GM12878 (cell line): ENCODE measurements at regions of chr3 and their contacts with region 1.

Region 1: GRCh38 chr3:58532794-58533220 is 4.2 kb downstream of the ACOX2 start:
- DNase-seq: peak; percentile 11
- ATAC-seq: peak; percentile 99
- H3K4me3 ChIP-seq: no peak overlapping the region
- H3K27ac ChIP-seq: no peak overlapping the region
- H3K4me1 ChIP-seq: no peaks in the 10 kb centered on the region
- H3K27me3 ChIP-seq: no peaks in the 10 kb centered on the region; a peak in 1 of 4 replicates
- CTCF ChIP-seq: peak; percentile 94 to 96 (median 94)
- EP300 ChIP-seq: no peak
- POLR2A ChIP-seq: no peak
- RAD21 ChIP-seq: peak; percentile 96

Region 2: DNA sequence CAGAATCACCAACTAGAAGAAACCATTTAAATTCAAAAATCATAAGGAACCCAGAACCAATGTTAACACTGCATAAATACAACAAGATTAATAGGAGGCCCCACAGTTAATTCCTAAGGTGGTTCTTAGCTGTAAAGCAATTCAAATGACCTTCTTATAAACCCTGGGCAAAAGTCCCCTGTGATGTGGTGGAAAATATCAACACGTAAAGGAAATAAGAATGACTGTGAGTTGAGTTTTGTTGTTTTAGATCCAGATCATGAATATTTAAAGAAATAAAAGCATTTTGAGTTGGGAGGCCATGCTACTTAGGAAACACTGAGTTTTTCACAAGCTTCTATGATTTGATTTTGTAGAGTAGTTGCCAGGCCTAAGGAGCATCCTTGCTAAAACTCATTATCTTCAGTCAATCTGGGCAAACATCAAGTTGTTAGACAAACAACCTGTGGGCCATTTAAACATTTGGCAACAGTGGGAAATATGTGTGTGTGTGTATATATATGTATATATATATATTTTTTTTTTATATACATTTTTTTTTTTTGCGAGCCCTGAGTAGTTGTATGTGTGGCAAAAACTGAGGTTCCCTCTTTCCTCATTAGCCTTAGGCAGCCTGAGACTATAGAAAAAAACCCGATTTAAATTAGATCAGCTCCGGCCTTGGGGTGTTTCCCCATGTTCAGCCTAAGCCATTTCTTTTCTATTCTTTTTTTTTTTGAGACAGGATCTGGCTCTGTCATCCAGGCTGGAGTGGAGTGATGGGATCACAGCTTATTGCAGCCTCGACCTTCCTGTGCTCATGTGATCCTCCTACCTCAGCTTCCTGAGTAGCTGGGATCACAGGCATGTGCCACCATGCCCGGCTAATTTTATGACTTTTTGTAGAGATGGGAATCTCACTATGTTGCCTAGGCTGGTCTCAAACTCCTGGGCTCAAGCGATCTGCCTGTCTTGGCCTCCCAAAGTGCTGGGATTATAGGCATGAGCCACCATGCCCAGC is 208.1 kb before region 1 on chr3:
- CTCF ChIA-PET with region 1: interaction called, 8 read pairs
- POLR2A ChIA-PET with region 1: no interaction called
- RAD21 ChIA-PET with region 1: interaction called, 3 read pairs
- SMC1A ChIA-PET with region 1: interaction called, 3 read pairs
- in situ Hi-C with region 1: loop called (anchors 10 kb)
- intact Hi-C with region 1: loop called (anchors 2 kb)
- DNase-seq: no peak
- ATAC-seq: peak; percentile 59
- H3K4me3 ChIP-seq: no peak overlapping the region
- H3K27ac ChIP-seq: no peak overlapping the region; the same call in 1 of the 2 replicates
- H3K4me1 ChIP-seq: peaks cover 17% of the 10 kb centered on the region
- H3K27me3 ChIP-seq: no peaks in the 10 kb centered on the region
- CTCF ChIP-seq: no peak
- EP300 ChIP-seq: no peak
- POLR2A ChIP-seq: no peak
- RAD21 ChIP-seq: no peak

Region 3: GRCh38 chr3:58349792-58350626 is 182.8 kb before region 1 on chr3:
- CTCF ChIA-PET with region 1: interaction called, 10 read pairs
- POLR2A ChIA-PET with region 1: no interaction called
- RAD21 ChIA-PET with region 1: no interaction called
- SMC1A ChIA-PET with region 1: interaction called, 3 read pairs
- in situ Hi-C with region 1: no loop called
- intact Hi-C with region 1: no loop called
- DNase-seq: peak; percentile 87
- ATAC-seq: peak; percentile 88
- H3K4me3 ChIP-seq: peak overlapping the region; percentile 9; the same call in 1 of the 2 replicates
- H3K27ac ChIP-seq: peak overlapping the region; percentile 85
- H3K4me1 ChIP-seq: peaks cover 55% of the 10 kb centered on the region
- H3K27me3 ChIP-seq: no peaks in the 10 kb centered on the region
- CTCF ChIP-seq: no peak
- EP300 ChIP-seq: 0 out of 4 replicates have a peak, but pooled peaks of 1 of the 2 experiments have one; percentile 18
- POLR2A ChIP-seq: peak; percentile 60
- RAD21 ChIP-seq: no peak

Region 4: DNA sequence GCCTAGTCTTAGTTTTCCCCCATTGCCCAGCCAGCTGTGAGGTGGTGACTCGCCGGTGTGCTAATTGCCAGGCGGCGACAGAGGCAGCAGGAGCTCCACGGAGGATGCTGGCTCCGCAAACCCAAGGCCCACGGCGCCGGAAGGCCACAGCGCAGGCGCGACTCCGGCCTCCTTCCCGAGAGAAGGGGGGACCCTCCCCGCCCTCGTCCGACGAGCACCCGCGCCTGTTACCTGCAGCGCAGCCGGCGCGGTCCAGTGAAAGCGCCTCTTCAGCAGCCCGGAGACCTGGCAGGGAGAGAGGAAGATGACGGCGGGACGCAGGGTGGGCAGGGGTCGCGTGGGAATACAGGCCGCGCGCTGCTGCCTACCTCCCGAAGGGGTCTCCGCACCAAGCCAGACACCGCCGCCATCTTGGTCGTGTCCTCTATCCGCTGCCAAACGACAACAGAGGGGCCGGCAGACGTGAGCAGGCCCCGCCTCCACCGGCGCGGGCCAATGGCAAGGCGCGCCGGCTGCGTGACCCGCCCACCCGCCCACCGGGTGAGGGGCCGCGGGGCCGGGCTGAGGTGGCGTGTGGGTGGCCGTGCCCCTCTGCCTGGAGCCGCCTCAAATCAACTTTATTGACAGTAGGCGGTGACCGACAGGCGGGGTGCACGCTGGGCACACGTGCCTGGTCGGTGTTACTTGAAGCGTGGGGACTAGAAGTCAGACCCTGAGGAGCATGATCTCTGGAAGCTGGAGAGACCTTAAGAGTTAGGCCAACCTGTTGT is 99.2 kb before region 1 on chr3 and contains the start of gene PDHB:
- CTCF ChIA-PET with region 1: interaction called, 3 read pairs
- POLR2A ChIA-PET with region 1: no interaction called
- RAD21 ChIA-PET with region 1: no interaction called
- SMC1A ChIA-PET with region 1: no interaction called
- in situ Hi-C with region 1: no loop called
- intact Hi-C with region 1: loop called (anchors 5 kb)
- DNase-seq: peak; percentile 59
- ATAC-seq: peak; percentile 98
- H3K4me3 ChIP-seq: peak within 1 kb of the TSS; percentile 87
- H3K27ac ChIP-seq: peak within 1 kb of the TSS; percentile 81
- H3K4me1 ChIP-seq: peaks cover 14% of the 10 kb centered on the region
- H3K27me3 ChIP-seq: no peaks in the 10 kb centered on the region
- CTCF ChIP-seq: no peak
- EP300 ChIP-seq: no peak
- POLR2A ChIP-seq: peak; percentile 99
- RAD21 ChIP-seq: no peak
- polyA plus RNA-seq, gene PDHB: 167 to 224 TPM

Region 5: GRCh38 chr3:58463181-58463941 is 69.4 kb before region 1 on chr3:
- CTCF ChIA-PET with region 1: interaction called, 6 read pairs
- POLR2A ChIA-PET with region 1: no interaction called
- RAD21 ChIA-PET with region 1: interaction called, 3 read pairs
- SMC1A ChIA-PET with region 1: interaction called, 5 read pairs
- in situ Hi-C with region 1: no loop called
- intact Hi-C with region 1: loop called (anchors 1 kb)
- DNase-seq: no peak
- ATAC-seq: peak; percentile 98
- H3K4me3 ChIP-seq: no peak overlapping the region
- H3K27ac ChIP-seq: no peak overlapping the region
- H3K4me1 ChIP-seq: no peaks in the 10 kb centered on the region
- H3K27me3 ChIP-seq: no peaks in the 10 kb centered on the region
- CTCF ChIP-seq: peak; percentile 90 to 91 (median 90)
- EP300 ChIP-seq: 0 out of 4 replicates have a peak, but pooled peaks of 1 of the 2 experiments have one; percentile 31
- POLR2A ChIP-seq: no peak
- RAD21 ChIP-seq: peak; percentile 67

Region 6: GRCh38 chr3:58766587-58767282 is 233.9 kb after region 1 on chr3:
- CTCF ChIA-PET with region 1: no interaction called
- POLR2A ChIA-PET with region 1: no interaction called
- RAD21 ChIA-PET with region 1: no interaction called
- SMC1A ChIA-PET with region 1: no interaction called
- in situ Hi-C with region 1: no loop called
- intact Hi-C with region 1: no loop called
- DNase-seq: no peak
- ATAC-seq: no peak
- H3K4me3 ChIP-seq: no peak overlapping the region
- H3K27ac ChIP-seq: no peak overlapping the region
- H3K4me1 ChIP-seq: no peaks in the 10 kb centered on the region
- H3K27me3 ChIP-seq: no peaks in the 10 kb centered on the region
- CTCF ChIP-seq: no peak
- EP300 ChIP-seq: no peak
- POLR2A ChIP-seq: no peak
- RAD21 ChIP-seq: no peak